ENCODE measurements at regions of chr7 and their contacts with region 1.

Region 1: DNA sequence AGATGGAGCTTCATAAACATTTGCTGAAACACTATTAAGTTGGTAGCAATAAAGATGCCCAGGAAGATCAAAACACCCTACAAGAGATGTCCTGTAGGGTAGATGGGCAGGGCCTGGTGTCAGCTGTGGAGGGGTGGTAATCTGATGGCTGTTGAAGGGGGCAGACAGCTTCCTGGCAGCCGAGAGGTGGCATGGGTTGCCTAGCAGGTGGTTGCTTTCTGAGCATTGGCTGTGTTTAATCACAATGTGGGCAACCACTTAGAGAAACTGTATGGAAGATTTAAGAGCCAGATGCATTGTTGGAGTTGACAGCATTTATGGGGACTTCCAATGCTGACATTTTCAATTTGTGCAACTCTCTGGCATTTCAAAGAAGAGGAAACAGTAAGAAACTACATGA is 79.9 kb upstream of the SLC26A5 start:
- DNase-seq: no peak
- H3K4me3 ChIP-seq: no peak overlapping the region
- H3K27ac ChIP-seq: no peak overlapping the region
- H3K4me1 ChIP-seq: no peaks in the 10 kb centered on the region
- H3K27me3 ChIP-seq: no peaks in the 10 kb centered on the region
- CTCF ChIP-seq: no peak
- EP300 ChIP-seq: no peak
- POLR2A ChIP-seq: no peak

Region 2: GRCh38 chr7:103541026-103541425 is 15.1 kb after region 1 on chr7:
- intact Hi-C with region 1: no loop called
- DNase-seq: peak in 1 of 5 donors; percentile 36
- H3K4me3 ChIP-seq: no peak overlapping the region
- H3K27ac ChIP-seq: no peak overlapping the region
- H3K4me1 ChIP-seq: peaks cover 2% of the 10 kb centered on the region
- H3K27me3 ChIP-seq: no peaks in the 10 kb centered on the region
- CTCF ChIP-seq: no peak
- EP300 ChIP-seq: no peak
- POLR2A ChIP-seq: no peak

Region 3: GRCh38 chr7:103564416-103564815 is 38.5 kb after region 1 on chr7:
- intact Hi-C with region 1: loop called in 1 of 4 experiments (anchors 2 kb)
- DNase-seq: no peak
- H3K4me3 ChIP-seq: no peak overlapping the region
- H3K27ac ChIP-seq: no peak overlapping the region
- H3K4me1 ChIP-seq: no peaks in the 10 kb centered on the region
- H3K27me3 ChIP-seq: no peaks in the 10 kb centered on the region
- CTCF ChIP-seq: no peak
- EP300 ChIP-seq: no peak
- POLR2A ChIP-seq: no peak

Region 4: DNA sequence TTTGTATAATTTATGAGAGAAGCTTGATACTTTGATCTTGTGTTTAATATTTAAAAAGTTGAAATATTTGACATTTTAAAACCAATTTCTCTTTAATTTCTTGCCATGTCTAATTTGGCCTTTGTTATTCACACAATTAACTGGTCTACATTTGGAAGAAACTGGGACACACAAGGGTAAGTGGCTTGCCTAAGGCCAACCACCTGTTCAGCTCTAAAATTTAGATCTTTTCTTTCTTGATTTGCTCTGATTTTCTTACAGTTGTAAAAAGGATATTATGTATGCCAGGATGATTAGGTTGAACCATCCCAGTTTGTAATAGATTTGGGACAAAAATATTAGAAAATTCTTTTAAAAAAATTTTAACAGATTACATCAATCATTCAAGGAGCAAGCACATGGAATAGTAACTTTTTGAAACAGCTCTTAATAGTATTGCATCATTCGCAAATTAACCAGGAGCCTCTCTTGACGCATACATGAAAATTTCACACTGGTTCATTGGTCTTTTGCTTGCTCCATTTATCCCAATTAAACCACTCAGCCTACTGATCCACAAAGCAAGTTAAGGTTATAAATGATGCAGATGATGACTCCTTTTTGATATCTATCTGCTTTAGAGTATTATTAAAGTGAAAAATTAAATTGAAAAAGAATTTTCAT is 142.5 kb after region 1 on chr7:
- intact Hi-C with region 1: no loop called
- DNase-seq: no peak
- H3K4me3 ChIP-seq: no peak overlapping the region
- H3K27ac ChIP-seq: no peak overlapping the region
- H3K4me1 ChIP-seq: no peaks in the 10 kb centered on the region
- H3K27me3 ChIP-seq: no peaks in the 10 kb centered on the region
- CTCF ChIP-seq: no peak
- EP300 ChIP-seq: no peak
- POLR2A ChIP-seq: no peak

Measured in ovary (tissue), 10 donors.